ENCODE measurements at regions of chr13 and their contacts with region 1.

Region 1: GRCh38 chr13:79380997-79381396 is 25.1 kb downstream of the RBM26 start:
- DNase-seq: no peak
- H3K4me3 ChIP-seq: no peak overlapping the region
- H3K27me3 ChIP-seq: no peaks in the 10 kb centered on the region
- CTCF ChIP-seq: no peak

Region 2: GRCh38 chr13:79393564-79394249 is 12.7 kb after region 1 on chr13:
- CTCF ChIA-PET with region 1: interaction called, 10 read pairs
- POLR2A ChIA-PET with region 1: no interaction called
- DNase-seq: no peak
- H3K4me3 ChIP-seq: no peak overlapping the region
- H3K27me3 ChIP-seq: no peaks in the 10 kb centered on the region
- CTCF ChIP-seq: no peak

Measured in BJ (cell line).